ENCODE measurements at regions of chr14 and their contacts with region 1.

Region 1: GRCh38 chr14:64764641-64765520 is 60.7 kb downstream of the PLEKHG3 start:
- DNase-seq: peak; percentile 69 to 87
- ATAC-seq: peak; percentile 87 to 93 (median 91)
- H3K4me3 ChIP-seq: peak overlapping the region; percentile 17
- H3K4me3 Mint-ChIP-seq: peak overlapping the region; percentile 66
- H3K27ac ChIP-seq: no peak overlapping the region
- H3K27ac Mint-ChIP-seq: peak overlapping the region; percentile 23 to 76
- H3K4me1 ChIP-seq: peaks cover 55% of the 10 kb centered on the region
- H3K4me1 Mint-ChIP-seq: peaks cover 33 to 59% of the 10 kb centered on the region in 2 donors
- H3K27me3 ChIP-seq: peaks cover 6% of the 10 kb centered on the region
- H3K27me3 Mint-ChIP-seq: peaks cover 0 to 12% of the 10 kb centered on the region in 2 donors
- CTCF ChIP-seq: peak; percentile 82

Region 2: GRCh38 chr14:64671591-64671990 is 93.3 kb before region 1 on chr14:
- intact Hi-C with region 1: loop called (anchors 1 kb)
- DNase-seq: peak in 1 of 2 donors; percentile 80
- ATAC-seq: peak; percentile 54 to 70 (median 58)
- H3K4me3 ChIP-seq: no peak overlapping the region
- H3K4me3 Mint-ChIP-seq: peak overlapping the region; percentile 13
- H3K27ac ChIP-seq: no peak overlapping the region
- H3K27ac Mint-ChIP-seq: peak overlapping the region in 1 of 2 donors; percentile 61
- H3K4me1 ChIP-seq: peaks cover 34% of the 10 kb centered on the region
- H3K4me1 Mint-ChIP-seq: peaks cover 30 to 31% of the 10 kb centered on the region in 2 donors
- H3K27me3 ChIP-seq: no peaks in the 10 kb centered on the region
- H3K27me3 Mint-ChIP-seq: peaks cover 0 to 2% of the 10 kb centered on the region in 2 donors
- CTCF ChIP-seq: peak; percentile 69

Measured in natural killer cell (primary cell).